ENCODE measurements at regions of chr4 and their contacts with region 1.

Region 1: GRCh38 chr4:41281038-41281634 is 24.4 kb downstream of the UCHL1 start:
- DNase-seq: peak; percentile 42
- H3K4me3 ChIP-seq: no peak overlapping the region
- CTCF ChIP-seq: peak; percentile 65

Region 2: GRCh38 chr4:41257257-41257901 is 23.8 kb before region 1 on chr4:
- CTCF ChIA-PET with region 1: interaction called, 28 read pairs
- POLR2A ChIA-PET with region 1: no interaction called
- DNase-seq: no peak
- H3K4me3 ChIP-seq: peak overlapping the region; percentile 74
- CTCF ChIP-seq: no peak

Region 3: DNA sequence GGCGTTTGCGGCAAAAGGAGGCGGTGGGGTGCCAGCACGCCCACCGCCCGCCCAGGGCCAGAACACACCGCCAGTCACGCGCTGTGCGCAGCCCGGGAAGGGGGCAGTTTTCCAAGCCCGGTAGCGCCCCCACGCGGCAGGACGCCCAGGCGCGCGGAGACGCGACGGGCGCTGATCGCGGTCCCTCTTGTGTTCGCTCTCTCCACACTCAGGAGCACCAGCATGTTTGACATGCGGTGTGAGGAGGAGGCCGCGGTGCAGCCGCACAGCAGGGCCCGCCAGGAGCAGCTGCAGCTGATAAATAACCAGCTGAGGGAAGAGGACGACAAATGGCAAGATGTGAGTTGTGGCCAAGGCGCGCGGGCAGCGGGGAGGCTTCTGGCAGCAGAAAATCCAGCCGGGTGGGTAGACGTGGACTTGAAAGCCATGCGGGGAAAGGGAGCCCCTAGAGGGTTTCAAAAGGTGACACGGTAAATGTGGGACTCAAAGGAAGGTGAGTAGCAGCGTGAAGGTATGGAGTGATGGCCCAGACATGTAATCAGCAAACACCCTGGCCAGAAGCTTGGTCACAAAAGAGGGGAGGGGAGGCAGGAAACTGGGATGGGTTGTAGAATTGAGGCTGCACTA is 363.3 kb after region 1 on chr4:
- CTCF ChIA-PET with region 1: interaction called, 47 read pairs
- POLR2A ChIA-PET with region 1: no interaction called
- DNase-seq: no peak
- H3K4me3 ChIP-seq: no peak overlapping the region
- CTCF ChIP-seq: peak; percentile 82

Region 4: DNA sequence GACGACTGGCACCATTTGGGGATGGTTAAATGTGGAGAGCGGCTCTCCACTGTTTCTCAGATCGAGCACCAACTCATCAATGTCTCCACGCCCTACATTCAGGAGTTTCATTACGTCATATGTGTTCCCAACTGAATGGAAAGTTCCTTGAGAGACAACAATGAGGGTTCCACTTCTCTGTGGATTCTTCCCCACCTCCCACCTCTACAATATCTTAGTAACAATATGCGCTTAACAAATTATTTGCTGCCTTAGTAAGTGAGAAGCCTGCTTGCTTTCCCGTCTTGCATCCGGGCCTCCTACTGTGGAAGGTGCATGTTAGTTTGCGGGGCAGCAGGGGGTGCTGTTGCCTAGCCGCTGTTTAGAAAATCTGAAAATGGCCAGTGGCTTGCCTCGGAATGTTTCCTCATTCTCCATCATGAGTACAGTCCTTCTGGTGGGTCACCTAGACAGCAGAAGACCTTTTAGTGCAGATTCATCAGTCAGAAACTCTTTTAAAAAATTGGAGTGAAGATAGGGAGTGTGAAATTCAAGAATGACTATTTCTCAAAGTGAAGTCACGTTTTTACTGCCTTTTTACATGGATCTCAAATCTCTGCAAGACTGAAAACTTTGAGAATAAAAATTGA is 411.7 kb after region 1 on chr4:
- CTCF ChIA-PET with region 1: interaction called, 11 read pairs
- POLR2A ChIA-PET with region 1: no interaction called
- DNase-seq: peak; percentile 5
- H3K4me3 ChIP-seq: no peak overlapping the region
- CTCF ChIP-seq: peak; percentile 83

Region 5: GRCh38 chr4:41887821-41888686 is 606.9 kb after region 1 on chr4:
- CTCF ChIA-PET with region 1: interaction called, 34 read pairs
- POLR2A ChIA-PET with region 1: no interaction called
- DNase-seq: peak; percentile 4
- H3K4me3 ChIP-seq: no peak overlapping the region
- CTCF ChIP-seq: peak; percentile 63